Activated CD4-positive, alpha-beta memory T cell treated with anti-CD3 and anti-CD28 coated beads for 36 hours (primary cell): ENCODE measurements at regions of chr10 and their contacts with region 1.

Region 1: DNA sequence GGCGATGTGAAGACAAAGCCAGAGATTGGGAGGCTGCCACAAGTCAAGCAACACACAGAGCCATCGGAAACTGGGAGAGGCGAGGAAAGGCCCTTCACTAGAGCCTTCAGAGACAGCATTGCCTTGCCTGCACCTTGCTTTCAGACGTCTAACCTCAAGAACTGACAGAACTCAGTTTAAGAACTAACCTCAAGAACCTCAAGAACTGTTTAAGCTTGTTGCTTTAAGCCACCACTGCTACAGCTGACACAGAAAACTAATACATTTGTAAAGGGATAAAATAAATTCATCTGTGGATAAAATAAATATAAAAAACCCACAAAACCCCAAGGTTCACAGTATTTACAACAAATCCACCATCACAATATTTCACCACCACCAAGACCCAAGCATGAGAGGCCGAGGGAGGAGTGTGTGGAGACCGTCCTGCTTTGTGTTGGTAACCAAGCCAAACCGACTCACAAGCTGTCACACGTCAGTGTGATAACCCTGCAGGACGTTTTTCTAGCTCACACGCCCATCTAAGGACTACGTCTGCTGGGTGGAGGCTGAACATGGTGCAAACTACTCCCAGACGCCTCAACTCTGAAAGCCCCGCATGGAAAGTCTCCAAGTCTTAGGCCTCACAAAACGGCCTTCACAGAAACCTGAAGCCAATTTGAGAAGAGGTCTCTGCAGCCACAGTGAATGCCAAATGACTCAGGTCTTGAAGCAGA is 116.8 kb downstream of the ABLIM1 start:
- DNase-seq: peak; percentile 86
- H3K4me3 Mint-ChIP-seq: peak overlapping the region; percentile 51
- H3K27ac Mint-ChIP-seq: peak overlapping the region; percentile 96
- H3K4me1 Mint-ChIP-seq: peaks cover 77% of the 10 kb centered on the region
- H3K27me3 Mint-ChIP-seq: no peaks in the 10 kb centered on the region

Region 2: GRCh38 chr10:114173921-114174694 is 367.1 kb before region 1 on chr10 and contains the start of gene CCDC186:
- CTCF ChIA-PET with region 1: no interaction called
- POLR2A ChIA-PET with region 1: interaction called, 3 read pairs
- intact Hi-C with region 1: loop called (anchors 2 kb)
- DNase-seq: peak; percentile 99
- H3K4me3 Mint-ChIP-seq: peak within 1 kb of the TSS; percentile 93
- H3K27ac Mint-ChIP-seq: peak within 1 kb of the TSS; percentile 91
- H3K4me1 Mint-ChIP-seq: peaks cover 33% of the 10 kb centered on the region
- H3K27me3 Mint-ChIP-seq: no peaks in the 10 kb centered on the region
- total RNA-seq, gene CCDC186: 12.6 to 13.8 TPM

Region 3: DNA sequence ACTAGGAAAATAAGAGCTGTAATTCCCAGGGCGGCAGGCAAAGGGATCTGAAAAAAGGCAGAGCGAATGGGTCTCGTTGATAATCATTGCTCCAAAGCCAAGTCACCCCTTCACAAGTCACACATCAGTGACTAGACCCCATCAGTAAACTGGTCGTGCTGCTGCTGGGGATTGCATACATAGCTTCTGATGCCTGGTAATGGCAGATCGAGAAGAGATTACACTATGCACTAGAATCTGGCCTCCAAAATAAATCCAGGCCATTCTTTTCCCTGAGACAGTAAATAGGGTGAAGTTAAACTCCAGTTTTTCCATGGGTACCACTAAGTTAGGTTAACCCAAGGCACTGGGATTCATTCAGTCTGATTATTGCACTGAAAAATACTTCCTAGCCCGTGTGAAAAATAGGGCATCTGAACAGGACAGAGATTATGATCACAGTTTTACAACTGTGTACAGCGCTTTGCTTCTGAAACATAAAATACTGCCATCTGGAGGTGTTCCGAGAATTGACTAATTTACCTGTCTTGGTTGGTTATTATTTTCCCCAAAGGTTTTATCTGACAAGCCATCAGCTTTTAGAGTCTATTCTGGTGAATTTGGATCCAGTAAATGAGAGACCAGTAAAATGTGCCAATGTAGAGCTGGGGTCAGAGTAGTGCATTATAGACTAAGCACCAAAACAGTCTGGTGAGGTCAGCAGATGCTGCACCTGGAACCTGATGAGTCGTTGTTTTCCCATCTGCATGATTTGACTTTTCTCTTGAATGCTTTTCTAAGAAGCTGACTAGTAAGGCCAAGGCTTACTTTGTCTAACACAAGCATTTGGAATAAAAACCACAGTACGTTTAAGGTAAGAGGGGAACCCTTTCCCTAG is 54.1 kb before region 1 on chr10:
- CTCF ChIA-PET with region 1: interaction called, 5 read pairs
- POLR2A ChIA-PET with region 1: interaction called, 4 read pairs
- intact Hi-C with region 1: loop called (anchors 1 kb)
- DNase-seq: peak; percentile 63
- H3K4me3 Mint-ChIP-seq: no peak overlapping the region
- H3K27ac Mint-ChIP-seq: peak overlapping the region; percentile 85
- H3K4me1 Mint-ChIP-seq: peaks cover 53% of the 10 kb centered on the region
- H3K27me3 Mint-ChIP-seq: no peaks in the 10 kb centered on the region

Region 4: GRCh38 chr10:114526504-114527238 is 14.6 kb before region 1 on chr10:
- CTCF ChIA-PET with region 1: interaction called, 25 read pairs
- POLR2A ChIA-PET with region 1: interaction called, 53 read pairs
- intact Hi-C with region 1: loop called (anchors 1 kb)
- DNase-seq: peak; percentile 94
- H3K4me3 Mint-ChIP-seq: peak overlapping the region; percentile 93
- H3K27ac Mint-ChIP-seq: peak overlapping the region; percentile 95
- H3K4me1 Mint-ChIP-seq: peaks cover 43% of the 10 kb centered on the region
- H3K27me3 Mint-ChIP-seq: no peaks in the 10 kb centered on the region

Region 5: DNA sequence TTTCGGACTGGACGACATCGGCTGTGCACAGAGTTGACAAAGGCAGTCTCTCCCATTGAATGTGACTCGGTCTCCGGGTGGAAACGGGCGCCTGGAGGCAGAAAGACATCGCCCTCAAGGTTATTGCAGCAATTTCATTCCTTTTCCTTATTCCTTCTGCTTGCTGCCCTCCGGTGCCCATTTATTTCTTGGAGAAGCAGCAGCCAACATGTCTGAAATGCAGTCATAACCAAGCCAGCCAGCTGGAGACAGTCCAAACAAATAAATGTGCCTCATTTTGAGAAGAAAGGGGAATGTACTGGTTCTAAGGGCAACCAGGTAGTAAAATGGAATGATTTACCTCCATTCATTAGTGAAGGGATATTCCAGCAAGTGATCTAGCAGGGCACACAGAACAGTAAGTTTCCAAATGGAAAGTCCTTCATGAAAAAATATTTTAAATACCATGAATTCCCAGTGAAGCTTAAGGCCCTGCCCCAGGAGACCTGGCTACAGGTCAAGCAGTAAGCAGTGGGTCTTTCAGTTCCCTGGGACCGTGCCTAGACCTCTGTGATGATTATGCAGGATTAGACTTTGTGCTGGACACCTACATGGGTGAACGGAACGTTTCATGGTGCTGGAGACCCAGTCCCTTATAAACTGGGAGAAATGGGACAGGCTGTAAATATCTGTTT is 30.2 kb after region 1 on chr10:
- CTCF ChIA-PET with region 1: no interaction called
- POLR2A ChIA-PET with region 1: no interaction called
- intact Hi-C with region 1: no loop called
- DNase-seq: no peak
- H3K4me3 Mint-ChIP-seq: no peak overlapping the region
- H3K27ac Mint-ChIP-seq: no peak overlapping the region
- H3K4me1 Mint-ChIP-seq: no peaks in the 10 kb centered on the region
- H3K27me3 Mint-ChIP-seq: peaks cover 1% of the 10 kb centered on the region

Region 6: DNA sequence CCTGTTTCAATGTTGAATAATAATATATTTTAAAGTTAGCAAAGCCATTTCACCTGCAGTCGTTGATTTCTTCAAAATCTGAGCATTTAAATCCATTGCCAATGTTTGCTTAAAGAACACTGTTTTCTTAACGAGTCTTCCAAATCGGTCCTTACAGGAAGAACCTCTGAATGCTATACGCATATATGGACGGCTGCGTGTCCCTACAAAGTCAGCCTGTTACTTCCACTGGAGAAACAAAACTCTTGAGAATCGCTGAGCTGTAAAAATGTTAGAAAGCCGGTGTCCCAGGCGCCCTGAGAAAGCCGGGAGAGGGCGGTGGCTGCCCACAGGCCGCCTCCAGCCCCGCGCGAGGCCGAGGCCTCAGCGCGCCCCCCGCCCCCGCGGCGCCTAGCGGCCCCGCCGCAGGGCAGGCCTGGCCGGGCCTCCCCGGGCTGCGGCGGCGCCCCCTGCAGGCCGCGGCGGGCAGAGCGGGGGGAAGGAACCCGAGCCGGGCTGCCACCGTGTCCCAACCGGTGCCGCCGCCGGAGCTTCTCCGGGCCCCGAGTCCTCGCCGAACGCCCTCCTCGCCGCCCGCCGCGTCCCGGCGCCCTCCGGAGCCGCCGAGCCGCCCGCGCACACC is 280.2 kb after region 1 on chr10 and contains the start of gene FHIP2A:
- CTCF ChIA-PET with region 1: interaction called, 11 read pairs
- POLR2A ChIA-PET with region 1: interaction called, 3 read pairs
- intact Hi-C with region 1: loop called (anchors 1 kb)
- DNase-seq: peak; percentile 86
- H3K4me3 Mint-ChIP-seq: peak within 1 kb of the TSS; percentile 82
- H3K27ac Mint-ChIP-seq: peak within 1 kb of the TSS; percentile 86
- H3K4me1 Mint-ChIP-seq: peaks cover 31% of the 10 kb centered on the region
- H3K27me3 Mint-ChIP-seq: no peaks in the 10 kb centered on the region
- total RNA-seq, gene FHIP2A: 17.2 to 21.4 TPM